Natural killer cell (primary cell): ENCODE measurements at regions of chr7 and their contacts with region 1.

Region 1: GRCh38 chr7:87600130-87601124 is at the start of gene ABCB1:
- DNase-seq: peak; percentile 47 to 75
- ATAC-seq: peak; percentile 74 to 85 (median 82)
- H3K4me3 ChIP-seq: peak within 1 kb of the TSS; percentile 82
- H3K4me3 Mint-ChIP-seq: peak within 1 kb of the TSS; percentile 83
- H3K27ac ChIP-seq: peak within 1 kb of the TSS; percentile 66
- H3K27ac Mint-ChIP-seq: peak within 1 kb of the TSS; percentile 68 to 87
- H3K4me1 ChIP-seq: peaks cover 7% of the 10 kb centered on the region
- H3K4me1 Mint-ChIP-seq: peaks cover 35 to 36% of the 10 kb centered on the region in 2 donors
- H3K27me3 ChIP-seq: no peaks in the 10 kb centered on the region
- H3K27me3 Mint-ChIP-seq: peaks cover 13 to 26% of the 10 kb centered on the region in 2 donors
- CTCF ChIP-seq: no peak
- total RNA-seq, gene ABCB1: 62.8 to 99.5 (median 81.4) TPM

Region 2: DNA sequence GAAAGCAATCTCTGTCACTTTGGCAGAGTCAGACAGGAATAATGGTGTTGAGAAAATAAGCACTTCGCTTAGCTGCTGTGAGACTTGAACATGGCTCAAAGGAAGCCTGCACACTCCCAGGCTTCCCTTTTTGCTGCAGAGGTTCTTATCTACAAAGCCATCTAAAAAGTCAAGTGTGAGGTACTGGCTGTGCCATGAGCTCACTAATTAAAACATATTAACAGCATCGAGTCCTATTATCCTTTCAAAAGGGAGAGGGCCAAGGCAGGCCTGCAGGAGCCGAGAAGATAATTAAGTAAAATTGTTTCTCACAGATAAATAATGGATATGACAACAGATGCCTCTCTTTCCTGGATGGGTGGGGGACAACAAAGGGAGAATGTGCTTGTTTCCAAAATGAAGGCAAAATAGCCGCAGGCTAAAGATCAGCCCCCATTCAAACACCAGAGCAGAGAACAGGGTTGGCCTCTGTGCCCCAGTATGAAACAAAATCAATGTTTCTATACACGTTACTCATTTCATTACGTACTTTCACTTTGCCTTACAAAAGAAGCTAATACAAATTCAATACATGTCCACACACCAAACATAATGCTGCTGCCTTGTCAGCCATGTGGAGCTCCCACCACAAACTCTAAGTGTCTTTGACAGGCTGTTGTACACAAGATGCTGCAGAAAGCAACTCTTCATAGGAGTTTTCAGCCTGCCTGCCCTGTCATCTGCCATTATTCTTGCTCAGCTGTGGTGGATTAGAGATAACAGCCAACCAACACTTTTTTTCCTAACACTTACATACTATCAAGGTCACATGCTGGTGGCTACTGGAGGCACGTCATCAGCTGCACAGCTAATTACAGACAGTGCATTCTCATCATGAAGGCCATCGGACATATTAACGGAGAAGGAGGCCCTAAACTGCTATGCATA is 596.3 kb before region 1 on chr7:
- intact Hi-C with region 1: no loop called
- DNase-seq: peak in 1 of 2 donors; percentile 15
- ATAC-seq: peak in 2 of 3 donors; percentile 45 to 85
- H3K4me3 ChIP-seq: no peak overlapping the region
- H3K4me3 Mint-ChIP-seq: peak overlapping the region; percentile 14
- H3K27ac ChIP-seq: no peak overlapping the region
- H3K27ac Mint-ChIP-seq: peak overlapping the region; percentile 45 to 79
- H3K4me1 ChIP-seq: peaks cover 4% of the 10 kb centered on the region
- H3K4me1 Mint-ChIP-seq: peaks cover 0 to 24% of the 10 kb centered on the region in 2 donors
- H3K27me3 ChIP-seq: no peaks in the 10 kb centered on the region
- H3K27me3 Mint-ChIP-seq: no peaks in the 10 kb centered on the region
- CTCF ChIP-seq: no peak

Region 3: DNA sequence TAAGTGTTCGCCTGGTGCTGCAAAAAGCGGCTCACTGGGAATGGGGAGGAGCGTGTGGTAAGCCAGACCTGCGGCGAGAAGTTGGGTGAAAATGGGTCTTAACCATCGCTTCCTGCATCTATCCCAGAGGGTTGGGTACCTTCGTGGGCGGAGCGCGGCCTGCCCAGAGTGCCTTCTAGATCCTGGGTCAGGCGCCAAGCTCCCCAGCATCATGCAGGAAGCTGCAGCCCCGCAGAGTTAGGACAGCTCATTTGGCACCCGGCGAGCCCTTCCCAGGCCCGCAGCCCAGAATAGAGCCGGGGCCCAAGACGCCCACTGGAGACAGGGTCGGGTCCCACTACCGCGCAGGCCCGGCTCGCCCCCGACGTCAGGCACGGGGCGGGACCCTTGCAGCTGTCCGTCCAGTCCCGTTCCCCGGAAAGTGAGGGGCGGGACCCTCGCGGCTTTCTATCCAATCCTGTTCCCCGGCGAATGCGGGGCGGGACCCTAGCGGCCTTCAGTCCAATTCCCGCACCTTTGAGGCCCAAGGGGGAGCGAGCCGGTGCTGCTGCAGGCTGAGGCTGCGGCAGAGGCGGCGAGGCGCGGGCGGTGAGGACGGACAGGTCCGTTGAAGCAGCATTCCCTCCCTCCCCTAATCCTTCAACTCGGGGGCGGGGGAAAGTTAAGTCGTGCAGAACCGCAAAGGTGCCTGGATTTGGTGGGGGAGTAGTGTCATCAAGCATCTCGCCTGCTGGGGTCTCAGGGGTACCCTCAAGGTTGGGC is 255.1 kb before region 1 on chr7 and contains the start of gene CROT:
- intact Hi-C with region 1: loop called (anchors 1 kb)
- DNase-seq: peak; percentile 93 to 95
- ATAC-seq: peak; percentile 96 to 99 (median 98)
- H3K4me3 ChIP-seq: peak within 1 kb of the TSS; percentile 95
- H3K4me3 Mint-ChIP-seq: peak within 1 kb of the TSS; percentile 92
- H3K27ac ChIP-seq: peak within 1 kb of the TSS; percentile 86
- H3K27ac Mint-ChIP-seq: peak within 1 kb of the TSS; percentile 91 to 96
- H3K4me1 ChIP-seq: peaks cover 8% of the 10 kb centered on the region
- H3K4me1 Mint-ChIP-seq: peaks cover 48 to 49% of the 10 kb centered on the region in 2 donors
- H3K27me3 ChIP-seq: no peaks in the 10 kb centered on the region
- H3K27me3 Mint-ChIP-seq: no peaks in the 10 kb centered on the region
- CTCF ChIP-seq: no peak
- total RNA-seq, gene CROT: 17.5 to 19.0 (median 17.9) TPM